ENCODE measurements at regions of chr10 and their contacts with region 1.

Region 1: DNA sequence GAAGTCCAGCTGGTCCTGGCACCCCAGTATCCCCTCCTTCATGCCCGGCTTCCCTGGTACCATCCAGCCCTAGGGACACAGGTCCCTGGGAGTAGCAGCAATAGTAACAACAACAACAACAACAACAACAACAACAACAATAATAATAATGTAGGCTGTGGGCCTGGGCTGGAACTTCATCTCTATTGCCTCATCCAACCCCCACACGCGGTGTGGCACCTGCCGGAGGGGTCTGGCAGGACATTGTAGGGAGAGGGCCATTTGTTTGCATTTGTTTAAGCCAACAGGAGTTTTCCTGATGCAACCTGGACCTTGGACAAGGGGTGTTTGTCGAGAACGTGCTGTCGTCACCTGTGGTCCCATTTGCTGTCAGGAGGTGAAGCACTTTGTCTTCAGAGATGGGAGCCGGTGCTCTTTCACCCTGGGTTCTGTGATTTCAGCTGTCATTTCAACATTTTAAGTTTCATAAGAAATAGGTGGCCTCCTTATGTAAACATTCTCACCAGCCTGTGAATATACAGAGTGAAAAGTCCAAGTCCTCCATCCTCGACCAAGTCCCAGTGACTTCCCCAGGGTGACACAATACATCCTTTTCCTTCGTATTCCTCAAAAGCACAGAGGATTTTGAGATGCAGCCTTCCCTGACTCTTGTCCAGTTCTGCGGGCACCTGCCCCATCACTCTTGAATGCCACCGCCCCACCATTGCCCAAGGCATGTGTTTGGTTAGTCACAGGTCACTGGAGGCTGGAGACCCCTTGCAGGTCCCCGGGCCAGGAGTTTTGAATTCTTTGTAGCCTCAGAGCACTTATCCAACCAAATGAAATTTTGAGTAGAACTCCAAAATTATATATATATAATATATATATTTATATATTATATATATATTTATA is 9.2 kb downstream of the LHPP start:
- DNase-seq: no peak
- ATAC-seq: no peak
- H3K4me3 ChIP-seq: no peak overlapping the region
- H3K4me3 Mint-ChIP-seq: no peak overlapping the region
- H3K27ac ChIP-seq: no peak overlapping the region
- H3K27ac Mint-ChIP-seq: peak overlapping the region in 1 of 9 donors; percentile 52
- H3K4me1 ChIP-seq: peaks cover 0 to 5% of the 10 kb centered on the region in 2 donors
- H3K4me1 Mint-ChIP-seq: peaks cover 5 to 20% (median 13%) of the 10 kb centered on the region in 7 donors
- H3K27me3 ChIP-seq: no peaks in the 10 kb centered on the region
- H3K27me3 Mint-ChIP-seq: no peaks in the 10 kb centered on the region

Region 2: GRCh38 chr10:124231168-124232155 is 239.3 kb before region 1 on chr10:
- CTCF ChIA-PET with region 1: no interaction called
- POLR2A ChIA-PET with region 1: no interaction called
- intact Hi-C with region 1: loop called in 1 of 2 experiments (anchors 5 kb)
- DNase-seq: peak; percentile 14 to 88 (median 70)
- ATAC-seq: peak; percentile 67
- H3K4me3 ChIP-seq: no peak overlapping the region
- H3K4me3 Mint-ChIP-seq: peak overlapping the region in 6 of 10 donors; percentile 19 to 73 (median 52)
- H3K27ac ChIP-seq: no peak overlapping the region
- H3K27ac Mint-ChIP-seq: peak overlapping the region; percentile 22 to 97 (median 83)
- H3K4me1 ChIP-seq: no peaks in the 10 kb centered on the region
- H3K4me1 Mint-ChIP-seq: peaks cover 0 to 13% (median 0%) of the 10 kb centered on the region in 7 donors
- H3K27me3 ChIP-seq: no peaks in the 10 kb centered on the region
- H3K27me3 Mint-ChIP-seq: peaks cover 0 to 19% (median 0%) of the 10 kb centered on the region in 5 donors

Region 3: GRCh38 chr10:124436191-124436638 is 34.6 kb before region 1 on chr10:
- CTCF ChIA-PET with region 1: no interaction called
- POLR2A ChIA-PET with region 1: no interaction called
- intact Hi-C with region 1: no loop called
- DNase-seq: no peak
- ATAC-seq: peak; percentile 20
- H3K4me3 ChIP-seq: no peak overlapping the region
- H3K4me3 Mint-ChIP-seq: no peak overlapping the region
- H3K27ac ChIP-seq: no peak overlapping the region
- H3K27ac Mint-ChIP-seq: no peak overlapping the region
- H3K4me1 ChIP-seq: no peaks in the 10 kb centered on the region
- H3K4me1 Mint-ChIP-seq: no peaks in the 10 kb centered on the region
- H3K27me3 ChIP-seq: no peaks in the 10 kb centered on the region
- H3K27me3 Mint-ChIP-seq: peaks cover 0 to 5% (median 3%) of the 10 kb centered on the region in 5 donors

Measured in naive thymus-derived CD4-positive, alpha-beta T cell (primary cell).